ENCODE measurements at regions of chr12 and their contacts with region 1.

Region 1: DNA sequence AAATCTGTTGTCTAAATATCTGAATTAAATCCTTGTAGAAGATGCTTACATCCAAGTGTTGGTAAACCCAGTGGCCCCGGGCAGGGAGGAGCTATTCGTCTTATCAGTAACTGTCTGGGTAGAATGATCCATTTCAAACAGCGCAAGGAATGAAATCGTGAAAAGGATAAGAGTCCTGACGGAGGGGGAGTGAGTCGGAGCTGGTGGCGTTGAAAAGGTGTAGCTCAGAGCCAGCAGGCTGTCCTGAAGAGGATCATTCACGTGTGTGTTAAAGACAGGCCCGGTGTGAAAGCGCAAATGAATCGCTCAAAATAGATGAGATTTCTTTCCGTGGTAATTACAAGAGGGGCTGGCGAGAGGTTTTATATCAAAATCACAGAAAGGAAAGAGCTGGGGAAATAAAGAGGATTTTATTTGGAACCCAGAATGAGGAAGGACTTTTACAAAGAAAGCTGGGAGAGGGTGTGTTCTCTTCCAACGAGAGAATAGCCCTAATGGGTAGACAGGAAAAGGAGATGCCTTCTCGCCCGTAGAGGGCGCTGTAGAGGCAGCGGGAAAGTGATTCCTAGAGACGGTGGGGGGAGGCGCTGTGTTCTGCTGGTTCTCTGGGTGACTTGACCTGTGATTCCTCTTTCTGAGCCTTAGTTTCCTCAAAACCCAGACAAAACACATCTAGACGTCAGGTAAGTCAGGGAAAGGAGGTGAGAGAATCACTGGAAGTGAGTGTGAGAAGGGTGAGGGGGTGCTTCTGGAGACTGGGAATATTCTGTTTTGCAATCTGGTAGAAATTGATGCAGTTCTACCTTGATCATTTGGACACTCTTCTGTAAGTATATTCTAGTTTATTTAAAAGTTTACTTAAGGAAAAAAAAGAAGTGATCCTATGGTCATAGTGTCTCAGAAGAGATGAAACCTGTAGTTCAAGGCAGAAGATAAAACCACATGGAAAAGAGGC is 39.3 kb downstream of the SRRM4 start:
- DNase-seq: peak; percentile 93
- ATAC-seq: peak; percentile 96
- H3K4me3 Mint-ChIP-seq: peak overlapping the region; percentile 53
- H3K27ac Mint-ChIP-seq: no peak overlapping the region
- H3K4me1 Mint-ChIP-seq: peaks cover 38% of the 10 kb centered on the region
- H3K27me3 Mint-ChIP-seq: no peaks in the 10 kb centered on the region
- CTCF ChIP-seq: peak; percentile 85

Region 2: DNA sequence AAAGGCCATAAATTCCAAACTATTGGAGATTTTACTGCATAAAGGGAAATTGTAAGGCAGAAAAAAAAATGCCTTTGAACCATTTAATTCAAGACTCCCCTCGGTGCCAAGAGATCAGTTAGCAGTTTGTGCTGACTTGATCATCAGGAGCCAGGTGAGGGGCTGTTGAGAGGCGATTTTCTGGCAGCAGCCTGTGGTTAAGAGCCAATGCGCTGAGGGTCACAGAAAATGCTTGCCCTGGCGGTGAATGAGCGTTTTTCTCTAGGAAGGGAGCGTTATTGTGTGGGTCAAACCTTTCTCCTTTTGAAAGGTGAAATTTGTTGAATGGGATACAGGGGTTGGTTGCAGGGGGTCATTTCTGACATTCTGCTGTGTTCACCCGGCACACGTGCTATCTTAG is 34.6 kb before region 1 on chr12:
- CTCF ChIA-PET with region 1: interaction called, 20 read pairs
- POLR2A ChIA-PET with region 1: no interaction called
- DNase-seq: peak; percentile 29
- ATAC-seq: peak; percentile 12
- H3K4me3 Mint-ChIP-seq: no peak overlapping the region
- H3K27ac Mint-ChIP-seq: no peak overlapping the region
- H3K4me1 Mint-ChIP-seq: peaks cover 21% of the 10 kb centered on the region
- H3K27me3 Mint-ChIP-seq: peaks cover 27% of the 10 kb centered on the region
- CTCF ChIP-seq: no peak

Region 3: DNA sequence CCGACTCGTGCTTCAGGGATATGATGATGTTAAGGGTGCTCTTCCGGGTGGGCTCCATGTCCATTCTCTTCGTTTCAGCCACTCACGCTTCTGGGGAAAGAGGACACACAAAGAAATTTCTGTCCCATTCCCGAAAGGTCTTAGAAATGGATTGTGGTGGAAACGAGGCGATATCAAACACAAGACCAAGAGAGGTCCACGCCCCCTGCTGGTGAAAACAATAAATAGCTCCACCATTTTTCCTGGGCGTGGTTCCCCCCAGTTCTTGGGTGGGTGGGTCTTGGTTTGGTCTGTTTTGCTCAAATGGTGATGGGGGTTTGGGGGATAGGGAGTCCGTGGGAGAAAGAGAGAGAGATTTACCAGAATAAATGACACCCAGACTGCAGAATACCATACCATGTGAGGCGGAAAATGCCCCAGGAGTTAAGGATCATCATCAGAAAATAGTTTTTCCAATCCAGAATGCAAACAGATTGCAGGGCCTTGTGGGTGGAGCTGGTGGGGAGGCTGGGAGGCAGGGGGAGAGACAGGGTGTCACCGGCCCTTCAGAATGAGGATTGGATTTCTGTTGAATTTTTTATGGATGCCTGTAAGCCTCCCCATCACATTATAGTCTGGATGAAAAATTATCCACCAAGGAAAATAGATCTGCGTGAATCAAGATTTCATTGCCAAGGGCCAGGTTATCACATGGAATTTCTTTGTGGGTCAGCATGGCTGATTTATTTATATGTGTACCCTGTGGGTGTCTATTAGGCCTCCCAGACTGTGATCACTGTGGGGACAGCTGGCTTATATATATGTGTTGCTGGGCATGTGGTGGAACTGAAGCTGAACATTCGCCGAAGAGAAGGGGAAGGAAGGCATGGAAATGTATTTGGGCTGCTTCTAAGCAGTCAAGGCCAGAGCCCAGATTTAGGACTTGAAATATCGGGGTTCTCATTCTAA is 16.5 kb after region 1 on chr12:
- CTCF ChIA-PET with region 1: interaction called, 38 read pairs
- POLR2A ChIA-PET with region 1: no interaction called
- DNase-seq: peak; percentile 57
- ATAC-seq: peak; percentile 72
- H3K4me3 Mint-ChIP-seq: no peak overlapping the region
- H3K27ac Mint-ChIP-seq: no peak overlapping the region
- H3K4me1 Mint-ChIP-seq: peaks cover 37% of the 10 kb centered on the region
- H3K27me3 Mint-ChIP-seq: no peaks in the 10 kb centered on the region
- CTCF ChIP-seq: peak; percentile 67

Region 4: GRCh38 chr12:119153477-119153876 is 132.8 kb after region 1 on chr12:
- CTCF ChIA-PET with region 1: interaction called, 19 read pairs
- POLR2A ChIA-PET with region 1: no interaction called
- DNase-seq: peak; percentile 99
- ATAC-seq: peak; percentile 84
- H3K4me3 Mint-ChIP-seq: peak overlapping the region; percentile 98
- H3K27ac Mint-ChIP-seq: peak overlapping the region; percentile 99
- H3K4me1 Mint-ChIP-seq: peaks cover 19% of the 10 kb centered on the region
- H3K27me3 Mint-ChIP-seq: no peaks in the 10 kb centered on the region
- CTCF ChIP-seq: no peak

Measured in WTC11 (cell line).